Activated B cell treated with CpG ODN at 0.5 μM for 24 hours (primary cell): ENCODE measurements at regions of chr6 and their contacts with region 1.

Region 1: DNA sequence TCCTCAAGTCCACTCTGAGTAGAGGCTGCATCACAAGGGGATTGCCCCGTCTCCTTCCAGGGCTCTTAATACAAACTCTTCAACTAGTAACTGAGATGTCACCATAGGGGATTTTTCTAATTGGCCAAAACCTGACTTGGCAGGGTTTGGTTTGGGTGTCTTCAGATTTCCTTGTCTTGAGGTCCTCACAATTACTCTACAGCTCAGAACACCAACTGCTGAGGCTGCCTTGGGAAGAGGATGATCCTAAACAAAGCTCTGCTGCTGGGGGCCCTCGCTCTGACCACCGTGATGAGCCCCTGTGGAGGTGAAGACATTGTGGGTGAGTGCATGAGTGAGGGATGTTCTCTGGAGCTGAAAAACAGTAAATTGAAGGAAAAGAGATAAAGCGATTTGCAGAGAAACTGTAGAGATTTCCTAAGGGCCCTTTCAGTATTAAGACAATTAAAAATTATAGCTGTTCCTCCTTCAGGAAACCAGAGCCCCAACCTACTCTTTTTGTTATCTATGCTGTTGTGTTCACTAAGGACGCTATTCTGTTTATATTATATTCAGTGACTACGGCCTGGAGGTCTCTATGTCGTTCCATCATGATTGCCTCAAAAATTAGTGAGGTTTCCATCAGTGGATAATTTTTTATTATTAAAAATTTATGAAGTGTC is at the start of gene HLA-DQA1:
- DNase-seq: no peak
- ATAC-seq: peak; percentile 85
- H3K4me3 Mint-ChIP-seq: peak within 1 kb of the TSS; percentile 100
- H3K27ac Mint-ChIP-seq: peak within 1 kb of the TSS; percentile 100
- H3K4me1 Mint-ChIP-seq: peaks cover 72% of the 10 kb centered on the region
- H3K27me3 Mint-ChIP-seq: no peaks in the 10 kb centered on the region
- CTCF ChIP-seq: no peak
- total RNA-seq, gene HLA-DQA1: 628 and 664 TPM in 2 replicates

Region 2: DNA sequence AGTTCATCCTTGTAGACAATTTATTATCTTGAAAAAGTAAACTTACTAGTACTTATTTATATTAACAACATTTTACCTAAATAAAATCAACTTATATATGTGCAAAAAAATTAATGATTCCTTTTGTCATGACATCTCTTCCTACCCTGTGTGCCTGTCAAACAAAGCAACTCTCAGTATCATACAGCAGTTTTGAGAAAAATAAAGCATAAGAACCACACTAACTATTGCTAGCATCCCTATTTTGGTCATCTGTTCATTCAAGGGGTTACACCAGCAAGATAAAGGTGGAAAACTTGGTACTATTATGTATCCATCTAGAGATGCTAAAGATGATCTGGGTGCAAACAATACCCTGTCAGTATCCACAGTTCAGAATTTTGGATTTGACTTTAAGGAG is 40.3 kb before region 1 on chr6:
- CTCF ChIA-PET with region 1: no interaction called
- POLR2A ChIA-PET with region 1: interaction called, 15 read pairs
- intact Hi-C with region 1: no loop called
- DNase-seq: no peak
- ATAC-seq: no peak
- H3K4me3 Mint-ChIP-seq: no peak overlapping the region
- H3K27ac Mint-ChIP-seq: no peak overlapping the region
- H3K4me1 Mint-ChIP-seq: peaks cover 49% of the 10 kb centered on the region
- H3K27me3 Mint-ChIP-seq: no peaks in the 10 kb centered on the region
- CTCF ChIP-seq: no peak

Region 3: DNA sequence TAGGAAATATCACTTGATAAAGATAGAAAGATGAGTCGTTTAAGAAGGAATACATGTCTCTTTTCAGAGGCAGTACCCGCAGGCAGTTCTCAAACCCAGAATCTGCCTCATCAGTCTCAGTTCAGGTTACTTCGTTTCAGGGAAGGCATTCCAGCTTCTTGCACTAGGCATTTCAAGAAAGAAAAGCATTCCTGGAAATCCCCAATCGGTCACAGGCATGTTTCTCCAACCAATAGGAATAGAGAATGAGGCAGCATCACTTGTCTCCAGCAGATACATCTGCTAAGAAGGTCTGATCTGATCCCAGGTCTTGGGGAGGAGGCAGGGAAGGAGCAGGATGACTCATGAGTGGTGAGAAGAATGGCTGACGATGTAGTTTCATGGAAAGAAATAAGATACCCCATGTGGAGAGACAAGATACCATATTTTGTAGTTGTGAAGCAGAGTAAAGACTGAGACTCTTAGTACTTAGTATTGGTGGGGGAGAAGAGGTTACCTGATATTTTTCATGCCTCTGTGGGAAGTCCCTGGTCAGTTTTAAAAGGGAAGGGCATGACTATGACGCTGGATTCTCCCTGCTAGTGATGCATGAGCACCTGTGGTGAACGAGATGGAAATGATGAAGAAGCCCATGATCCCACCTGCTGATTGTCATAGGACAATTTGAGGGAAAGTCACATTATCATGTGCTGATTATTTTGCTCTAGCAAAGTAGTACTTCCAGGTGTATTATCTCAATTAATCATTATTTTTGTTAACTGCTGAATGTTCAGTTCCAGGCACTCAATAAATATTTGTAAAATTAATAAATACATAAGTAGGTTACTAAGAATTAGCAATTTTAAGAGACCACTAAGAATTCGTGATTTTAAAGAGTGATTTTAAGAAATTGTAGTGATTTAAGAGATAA is 27.4 kb before region 1 on chr6:
- CTCF ChIA-PET with region 1: no interaction called
- POLR2A ChIA-PET with region 1: interaction called, 68 read pairs
- intact Hi-C with region 1: no loop called
- DNase-seq: no peak
- ATAC-seq: peak; percentile 84
- H3K4me3 Mint-ChIP-seq: no peak overlapping the region
- H3K27ac Mint-ChIP-seq: no peak overlapping the region
- H3K4me1 Mint-ChIP-seq: peaks cover 56% of the 10 kb centered on the region
- H3K27me3 Mint-ChIP-seq: no peaks in the 10 kb centered on the region
- CTCF ChIP-seq: no peak

Region 4: GRCh38 chr6:32666420-32667300 is 29.3 kb after region 1 on chr6 and contains the start of gene HLA-DQB1:
- CTCF ChIA-PET with region 1: no interaction called
- POLR2A ChIA-PET with region 1: interaction called, 59 read pairs
- intact Hi-C with region 1: loop called (anchors 2 kb)
- DNase-seq: no peak
- ATAC-seq: peak; percentile 65
- H3K4me3 Mint-ChIP-seq: peak within 1 kb of the TSS; percentile 90
- H3K27ac Mint-ChIP-seq: peak within 1 kb of the TSS; percentile 94
- H3K4me1 Mint-ChIP-seq: peaks cover 65% of the 10 kb centered on the region
- H3K27me3 Mint-ChIP-seq: no peaks in the 10 kb centered on the region
- CTCF ChIP-seq: no peak
- total RNA-seq, gene HLA-DQB1: 262 and 310 TPM in 2 replicates

Region 5: GRCh38 chr6:32692019-32692418 is 54.7 kb after region 1 on chr6:
- CTCF ChIA-PET with region 1: interaction called, 5 read pairs
- POLR2A ChIA-PET with region 1: interaction called, 31 read pairs
- intact Hi-C with region 1: loop called (anchors 1 kb)
- DNase-seq: no peak
- ATAC-seq: peak; percentile 49
- H3K4me3 Mint-ChIP-seq: peak overlapping the region; percentile 3
- H3K27ac Mint-ChIP-seq: peak overlapping the region; percentile 85
- H3K4me1 Mint-ChIP-seq: peaks cover 54% of the 10 kb centered on the region
- H3K27me3 Mint-ChIP-seq: no peaks in the 10 kb centered on the region
- CTCF ChIP-seq: no peak

Region 6: DNA sequence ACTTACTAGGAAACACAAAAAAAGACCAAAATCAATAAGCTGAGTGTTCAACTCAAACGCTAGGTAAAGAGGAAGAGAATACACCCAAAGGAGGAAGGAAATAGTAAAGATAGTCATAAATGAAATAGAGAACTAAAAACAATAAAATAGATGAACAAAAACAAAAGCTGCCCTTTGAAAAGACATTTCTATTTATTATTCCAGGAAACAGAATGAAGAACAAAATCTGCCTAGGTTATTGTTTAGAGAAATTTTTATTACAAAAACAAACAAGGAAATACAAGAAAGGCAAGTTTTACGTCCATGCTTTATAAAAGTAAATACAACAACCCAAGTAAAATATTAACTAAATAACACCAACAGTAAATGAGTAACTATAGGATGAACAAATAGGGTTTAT is 283.4 kb after region 1 on chr6:
- CTCF ChIA-PET with region 1: no interaction called
- POLR2A ChIA-PET with region 1: no interaction called
- intact Hi-C with region 1: no loop called
- DNase-seq: no peak
- ATAC-seq: peak; percentile 40
- H3K4me3 Mint-ChIP-seq: peak overlapping the region; percentile 67
- H3K27ac Mint-ChIP-seq: peak overlapping the region; percentile 81
- H3K4me1 Mint-ChIP-seq: peaks cover 73% of the 10 kb centered on the region
- H3K27me3 Mint-ChIP-seq: no peaks in the 10 kb centered on the region
- CTCF ChIP-seq: no peak